CD14-positive monocyte (primary cell): ENCODE measurements at regions of chr10 and their contacts with region 1.

Region 1: DNA sequence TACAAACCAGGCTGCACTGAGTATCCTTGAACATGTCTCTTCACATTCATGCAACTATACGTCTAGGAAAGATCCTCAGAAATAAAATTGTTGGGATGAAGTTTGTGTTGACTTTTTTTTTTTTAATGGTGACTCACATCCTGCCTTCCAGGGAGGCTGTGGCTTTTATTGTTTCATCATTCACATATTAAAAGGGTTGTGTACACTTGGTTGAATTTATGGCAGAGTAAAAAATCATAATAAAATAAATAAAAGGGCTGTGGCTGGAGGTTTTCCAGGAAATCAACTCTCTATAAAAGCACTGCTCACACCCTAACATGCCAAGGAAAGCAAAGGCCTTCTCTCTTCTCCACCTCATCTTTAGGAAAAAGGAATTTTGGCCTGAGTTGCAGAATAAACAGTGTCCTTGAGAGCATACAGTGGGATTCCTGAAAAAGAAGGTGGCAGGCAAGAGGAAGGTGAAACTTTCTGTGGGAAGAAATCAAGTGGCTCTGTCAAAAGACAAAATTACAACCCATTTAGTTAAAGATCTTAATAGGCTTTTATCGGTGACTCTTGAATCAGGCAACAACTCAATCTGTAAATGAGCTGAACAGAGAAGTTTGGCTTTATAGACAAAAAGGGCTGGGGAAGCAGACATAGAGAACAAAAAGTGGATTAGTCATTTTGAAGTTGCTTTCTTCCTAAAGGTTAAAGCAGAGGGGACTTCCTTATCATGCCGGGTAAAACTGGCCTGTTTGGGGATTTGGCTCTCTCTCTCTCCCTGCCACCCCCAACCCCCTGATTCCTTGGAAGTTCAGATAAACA is 41.6 kb upstream of the FHIP2A start:
- DNase-seq: no peak
- H3K4me3 ChIP-seq: no peak overlapping the region
- H3K4me3 Mint-ChIP-seq: no peak overlapping the region
- H3K27ac ChIP-seq: no peak overlapping the region
- H3K27ac Mint-ChIP-seq: no peak overlapping the region
- H3K4me1 ChIP-seq: no peaks in the 10 kb centered on the region
- H3K4me1 Mint-ChIP-seq: peaks cover 4% of the 10 kb centered on the region
- H3K27me3 ChIP-seq: no peaks in the 10 kb centered on the region
- H3K27me3 Mint-ChIP-seq: peaks cover 0 to 4% (median 0%) of the 10 kb centered on the region in 3 donors
- CTCF ChIP-seq: no peak

Region 2: GRCh38 chr10:114470956-114471905 is 308.8 kb before region 1 on chr10:
- intact Hi-C with region 1: loop called (anchors 5 to 10 kb)
- DNase-seq: peak; percentile 35 to 60 (median 58)
- H3K4me3 ChIP-seq: no peak overlapping the region
- H3K4me3 Mint-ChIP-seq: no peak overlapping the region
- H3K27ac ChIP-seq: no peak overlapping the region
- H3K27ac Mint-ChIP-seq: no peak overlapping the region
- H3K4me1 ChIP-seq: no peaks in the 10 kb centered on the region
- H3K4me1 Mint-ChIP-seq: peaks cover 2% of the 10 kb centered on the region
- H3K27me3 ChIP-seq: no peaks in the 10 kb centered on the region
- H3K27me3 Mint-ChIP-seq: peaks cover 2 to 3% (median 2%) of the 10 kb centered on the region in 3 donors
- CTCF ChIP-seq: peak; percentile 91

Region 3: DNA sequence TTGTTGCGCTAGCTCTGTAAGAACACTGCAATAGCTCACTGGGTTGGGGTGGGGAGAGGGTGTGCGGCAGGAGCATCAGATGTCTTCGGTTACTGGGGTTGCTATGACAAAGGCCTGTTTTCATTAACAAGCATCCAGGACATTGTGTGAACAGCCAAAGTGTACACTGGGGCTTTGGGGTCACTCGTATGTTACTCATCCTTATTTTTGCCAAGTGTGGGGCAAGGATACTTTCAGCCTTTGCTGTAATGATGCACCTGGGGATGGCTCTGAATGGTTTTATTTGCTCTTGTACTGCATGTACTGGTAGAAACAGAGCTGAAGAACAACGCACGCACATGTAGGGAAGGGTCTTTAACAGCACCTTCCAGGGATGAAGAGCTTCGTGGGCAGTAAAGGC is 302.7 kb before region 1 on chr10:
- intact Hi-C with region 1: loop called (anchors 5 to 10 kb)
- DNase-seq: no peak
- H3K4me3 ChIP-seq: no peak overlapping the region
- H3K4me3 Mint-ChIP-seq: no peak overlapping the region
- H3K27ac ChIP-seq: no peak overlapping the region
- H3K27ac Mint-ChIP-seq: no peak overlapping the region
- H3K4me1 ChIP-seq: no peaks in the 10 kb centered on the region
- H3K4me1 Mint-ChIP-seq: no peaks in the 10 kb centered on the region
- H3K27me3 ChIP-seq: no peaks in the 10 kb centered on the region
- H3K27me3 Mint-ChIP-seq: peaks cover 0 to 3% (median 0%) of the 10 kb centered on the region in 3 donors
- CTCF ChIP-seq: no peak

Region 4: DNA sequence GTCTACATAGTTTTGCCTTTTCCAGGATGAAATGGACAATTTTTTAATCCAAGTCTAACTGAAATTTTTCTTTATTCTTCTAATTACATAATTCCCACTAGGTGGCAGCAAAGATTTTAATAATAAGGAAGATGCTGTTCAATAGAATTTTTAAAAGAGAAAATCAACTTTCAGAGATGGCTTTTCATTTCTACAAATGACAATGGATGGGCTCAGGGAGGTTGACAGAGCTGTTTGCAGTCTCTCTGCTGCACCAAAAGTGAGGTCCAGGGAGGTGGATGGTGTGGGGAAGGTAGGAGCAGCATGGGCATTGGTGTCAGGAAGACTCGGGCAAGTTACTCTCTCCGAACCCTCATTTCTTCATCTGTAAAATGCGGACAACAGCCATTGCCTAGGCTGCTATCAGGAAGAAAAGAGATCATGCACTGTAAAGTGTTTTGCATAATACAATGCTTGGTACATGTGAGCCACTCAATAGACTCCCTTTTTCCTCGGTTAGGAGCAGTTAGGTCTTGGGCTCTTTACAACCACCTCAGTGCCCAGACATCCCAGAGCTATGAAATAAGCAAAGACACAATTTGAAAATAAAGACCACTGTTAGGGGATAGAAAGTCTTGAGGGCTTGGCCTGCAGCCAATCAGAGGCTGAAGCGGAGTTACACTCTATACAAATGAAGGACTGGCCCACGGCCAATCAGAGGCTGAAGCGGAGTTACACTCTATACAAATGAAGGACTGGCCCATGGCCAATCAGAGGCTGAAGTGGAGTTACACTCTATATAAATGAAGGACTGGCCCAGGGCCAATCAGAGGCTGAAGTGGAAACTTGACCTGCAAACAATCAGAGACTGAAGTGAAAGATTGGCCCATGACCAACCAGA is 229.0 kb before region 1 on chr10:
- intact Hi-C with region 1: loop called in 1 of 2 experiments (anchors 10 kb)
- DNase-seq: peak in 1 of 3 donors; percentile 3
- H3K4me3 ChIP-seq: no peak overlapping the region
- H3K4me3 Mint-ChIP-seq: no peak overlapping the region
- H3K27ac ChIP-seq: no peak overlapping the region
- H3K27ac Mint-ChIP-seq: no peak overlapping the region
- H3K4me1 ChIP-seq: no peaks in the 10 kb centered on the region
- H3K4me1 Mint-ChIP-seq: peaks cover 8% of the 10 kb centered on the region
- H3K27me3 ChIP-seq: no peaks in the 10 kb centered on the region
- H3K27me3 Mint-ChIP-seq: peaks cover 3 to 9% (median 8%) of the 10 kb centered on the region in 3 donors
- CTCF ChIP-seq: peak; percentile 70

Region 5: DNA sequence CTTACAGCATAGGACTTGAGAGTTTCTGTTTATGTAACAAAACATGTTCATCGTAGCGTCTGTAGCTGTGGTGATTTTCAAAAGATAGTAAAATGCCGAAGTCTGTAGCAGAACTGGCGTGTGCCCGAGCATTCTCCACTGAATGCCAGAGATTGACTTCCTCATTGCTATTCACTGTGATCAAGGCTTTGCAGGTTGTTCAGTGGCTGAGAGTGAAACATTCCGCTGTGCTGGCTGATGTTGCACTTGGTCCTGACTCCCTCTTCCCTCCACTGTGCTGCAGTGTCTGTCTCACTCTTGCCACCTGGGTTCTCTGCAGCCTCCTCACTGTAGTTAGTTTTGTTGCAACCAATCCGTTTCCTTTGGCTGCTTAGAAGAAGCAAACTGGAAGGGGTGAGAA is 79.2 kb after region 1 on chr10:
- intact Hi-C with region 1: no loop called
- DNase-seq: no peak
- H3K4me3 ChIP-seq: no peak overlapping the region
- H3K4me3 Mint-ChIP-seq: no peak overlapping the region
- H3K27ac ChIP-seq: no peak overlapping the region
- H3K27ac Mint-ChIP-seq: peak overlapping the region in 1 of 7 donors; percentile 61
- H3K4me1 ChIP-seq: no peaks in the 10 kb centered on the region
- H3K4me1 Mint-ChIP-seq: no peaks in the 10 kb centered on the region
- H3K27me3 ChIP-seq: no peaks in the 10 kb centered on the region
- H3K27me3 Mint-ChIP-seq: no peaks in the 10 kb centered on the region
- CTCF ChIP-seq: no peak

Region 6: DNA sequence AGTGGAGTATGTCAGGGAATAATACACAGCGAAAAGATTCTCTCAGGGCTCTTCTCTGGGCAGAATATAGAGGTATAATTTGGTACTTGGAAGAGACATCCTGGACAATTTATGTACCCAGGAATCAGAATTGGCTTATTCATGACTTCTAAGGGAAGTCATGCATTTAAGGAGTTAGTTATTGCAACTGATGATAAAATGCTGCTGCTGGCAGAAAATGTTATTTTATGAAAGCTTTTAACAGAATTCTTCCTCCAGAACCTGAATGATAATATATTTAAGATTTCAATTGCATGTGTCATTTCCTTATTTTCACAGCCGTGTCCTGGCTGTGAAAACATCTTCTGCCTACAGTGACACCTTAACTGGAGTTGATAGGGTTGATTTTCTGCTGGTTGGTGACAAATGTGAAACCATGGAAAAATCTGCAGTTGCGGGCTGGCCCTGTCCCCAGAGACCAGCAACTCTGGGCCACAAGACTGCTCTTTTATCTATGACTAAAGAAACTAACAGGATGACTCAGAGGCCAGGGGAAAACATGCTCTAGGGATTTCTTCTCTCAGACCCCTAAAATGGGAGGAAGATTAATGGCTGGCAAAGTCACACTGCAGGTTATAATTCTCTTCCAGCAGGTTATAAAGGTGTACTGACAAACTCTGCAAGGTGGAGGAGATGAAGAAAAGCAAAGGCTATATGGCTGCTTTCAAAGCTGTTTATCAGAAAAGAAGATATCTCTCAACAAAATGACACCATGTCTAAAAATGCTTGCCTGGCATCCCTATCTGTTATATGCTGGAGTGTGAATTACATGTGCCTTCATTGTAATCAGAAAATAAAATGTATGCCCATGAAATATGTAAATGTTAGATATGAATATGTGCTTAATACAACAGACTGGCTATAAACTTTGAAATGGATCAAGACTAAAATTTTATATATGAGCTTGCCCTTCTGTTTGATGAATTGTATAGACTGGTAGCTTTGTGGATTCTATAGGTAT is 145.9 kb after region 1 on chr10:
- intact Hi-C with region 1: no loop called
- DNase-seq: no peak
- H3K4me3 ChIP-seq: no peak overlapping the region
- H3K4me3 Mint-ChIP-seq: no peak overlapping the region
- H3K27ac ChIP-seq: no peak overlapping the region
- H3K27ac Mint-ChIP-seq: no peak overlapping the region
- H3K4me1 ChIP-seq: no peaks in the 10 kb centered on the region
- H3K4me1 Mint-ChIP-seq: no peaks in the 10 kb centered on the region
- H3K27me3 ChIP-seq: no peaks in the 10 kb centered on the region
- H3K27me3 Mint-ChIP-seq: peaks cover 4 to 8% (median 5%) of the 10 kb centered on the region in 3 donors
- CTCF ChIP-seq: no peak

Region 7: GRCh38 chr10:115001506-115002381 is 221.7 kb after region 1 on chr10:
- intact Hi-C with region 1: no loop called
- DNase-seq: no peak
- H3K4me3 ChIP-seq: no peak overlapping the region
- H3K4me3 Mint-ChIP-seq: no peak overlapping the region
- H3K27ac ChIP-seq: no peak overlapping the region
- H3K27ac Mint-ChIP-seq: no peak overlapping the region
- H3K4me1 ChIP-seq: no peaks in the 10 kb centered on the region
- H3K4me1 Mint-ChIP-seq: no peaks in the 10 kb centered on the region
- H3K27me3 ChIP-seq: no peaks in the 10 kb centered on the region
- H3K27me3 Mint-ChIP-seq: peaks cover 1 to 3% (median 2%) of the 10 kb centered on the region in 3 donors
- CTCF ChIP-seq: no peak